ENCODE measurements at regions of chr10 and their contacts with region 1.

Region 1: GRCh38 chr10:36725581-36726520 is 399.5 kb upstream of the ANKRD30A start:
- DNase-seq: peak; percentile 95
- H3K4me3 ChIP-seq: peak overlapping the region in 1 of 3 experiments; percentile 34
- H3K27ac ChIP-seq: peak overlapping the region; percentile 75
- H3K4me1 ChIP-seq: peaks cover 9% of the 10 kb centered on the region
- H3K27me3 ChIP-seq: no peaks in the 10 kb centered on the region
- CTCF ChIP-seq: peak; percentile 29 to 71

Region 2: DNA sequence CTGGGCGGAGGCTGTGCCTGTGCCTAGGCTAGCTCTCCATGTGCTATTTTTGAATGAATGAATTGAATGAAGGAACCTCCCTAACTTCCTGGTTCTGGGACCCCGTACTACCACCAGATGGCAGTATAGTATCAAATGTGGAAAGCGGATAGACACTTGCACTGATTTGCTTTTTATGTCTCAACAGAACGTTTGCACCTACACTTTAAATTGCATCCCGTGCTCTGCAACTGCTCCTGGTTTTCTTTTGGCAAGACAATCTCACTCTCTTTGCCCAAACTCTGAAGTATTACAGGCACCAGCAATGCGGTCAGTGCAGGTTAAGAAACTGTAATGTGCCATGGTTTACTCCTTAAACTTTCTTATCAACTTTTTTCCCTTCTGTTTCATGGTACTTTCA is 1090.3 kb before region 1 on chr10:
- CTCF ChIA-PET with region 1: interaction called, 6 read pairs
- dilution Hi-C with region 1: no loop called
- in situ Hi-C with region 1: no loop called
- intact Hi-C with region 1: loop called (anchors 1 kb)
- DNase-seq: peak; percentile 63
- H3K4me3 ChIP-seq: no peak overlapping the region
- H3K27ac ChIP-seq: no peak overlapping the region
- H3K4me1 ChIP-seq: peaks cover 35% of the 10 kb centered on the region
- H3K27me3 ChIP-seq: no peaks in the 10 kb centered on the region
- CTCF ChIP-seq: peak; percentile 92 to 93

Region 3: GRCh38 chr10:35781643-35782035 is 944.2 kb before region 1 on chr10:
- CTCF ChIA-PET with region 1: no interaction called
- dilution Hi-C with region 1: no loop called
- in situ Hi-C with region 1: no loop called
- intact Hi-C with region 1: loop called (anchors 1 kb)
- DNase-seq: no peak
- H3K4me3 ChIP-seq: no peak overlapping the region
- H3K27ac ChIP-seq: no peak overlapping the region
- H3K4me1 ChIP-seq: peaks cover 27% of the 10 kb centered on the region
- H3K27me3 ChIP-seq: no peaks in the 10 kb centered on the region
- CTCF ChIP-seq: peak in 1 of 2 donors; percentile 1

Region 4: GRCh38 chr10:35998026-35998425 is 727.8 kb before region 1 on chr10:
- CTCF ChIA-PET with region 1: no interaction called
- dilution Hi-C with region 1: no loop called
- in situ Hi-C with region 1: no loop called
- intact Hi-C with region 1: loop called (anchors 1 kb)
- DNase-seq: no peak
- H3K4me3 ChIP-seq: no peak overlapping the region
- H3K27ac ChIP-seq: no peak overlapping the region
- H3K4me1 ChIP-seq: no peaks in the 10 kb centered on the region
- H3K27me3 ChIP-seq: peaks cover 3% of the 10 kb centered on the region
- CTCF ChIP-seq: no peak

Region 5: DNA sequence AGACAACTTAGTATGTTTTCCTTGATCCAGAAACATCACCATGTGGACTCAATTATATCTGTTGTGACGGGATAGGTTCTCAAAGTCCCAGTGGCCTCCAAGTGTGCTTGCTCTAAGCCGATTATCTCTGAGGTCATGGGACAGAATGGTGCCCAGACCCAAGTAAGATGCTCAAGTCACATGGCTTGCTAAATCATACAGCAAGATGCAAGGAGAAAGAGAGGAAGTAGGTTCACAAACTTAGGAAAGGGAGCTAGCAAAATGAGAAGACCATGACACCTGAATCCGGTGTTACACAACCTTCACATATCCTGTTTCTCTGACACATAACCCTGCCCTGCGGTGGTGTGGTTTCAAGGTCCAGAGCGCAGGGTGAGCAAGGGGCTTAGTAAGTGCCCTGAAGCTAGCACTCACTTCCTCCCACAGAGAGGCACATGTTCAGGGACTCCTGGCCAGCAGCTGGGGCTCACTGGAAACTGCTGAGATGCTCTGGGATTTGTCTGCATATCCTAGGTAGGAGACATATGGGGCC is 191.3 kb before region 1 on chr10:
- CTCF ChIA-PET with region 1: interaction called, 4 read pairs
- dilution Hi-C with region 1: no loop called
- in situ Hi-C with region 1: no loop called
- intact Hi-C with region 1: loop called (anchors 5 kb)
- DNase-seq: peak; percentile 99
- H3K4me3 ChIP-seq: no peak overlapping the region
- H3K27ac ChIP-seq: peak overlapping the region; percentile 65
- H3K4me1 ChIP-seq: peaks cover 25% of the 10 kb centered on the region
- H3K27me3 ChIP-seq: no peaks in the 10 kb centered on the region
- CTCF ChIP-seq: no peak

Measured in mammary epithelial cell (primary cell).